H1 (cell line): ENCODE measurements at regions of chr10 and their contacts with region 1.

Region 1: DNA sequence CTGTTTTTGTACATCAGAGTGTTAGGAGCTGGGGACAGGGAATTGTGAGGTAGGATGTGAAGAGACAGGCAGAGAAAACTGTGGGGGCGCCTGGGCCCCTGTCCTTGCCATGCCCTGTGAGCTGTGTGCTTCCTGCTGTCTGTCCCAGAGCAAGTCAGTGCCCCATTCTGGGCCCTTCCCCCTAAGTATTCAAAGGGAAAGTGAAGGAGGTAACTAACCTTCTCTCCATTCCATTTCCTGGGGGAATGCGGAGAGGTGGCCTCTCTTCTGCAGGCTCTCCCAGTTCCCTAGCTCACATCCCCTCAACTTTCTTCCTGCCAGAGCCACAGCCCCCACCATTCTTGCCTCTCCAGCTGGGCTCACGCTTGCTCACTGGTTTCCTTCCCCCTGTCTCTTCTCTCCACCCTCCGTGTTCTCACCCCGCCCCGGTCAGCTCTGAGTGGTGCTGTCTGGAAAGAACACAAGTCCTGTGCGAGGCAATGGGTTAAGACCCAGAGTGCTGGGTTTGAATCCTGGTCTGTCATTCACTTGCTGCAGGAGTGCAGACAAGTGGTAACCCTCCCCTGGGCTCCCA is 9.7 kb upstream of the VSIR start:
- DNase-seq: no peak
- H3K4me3 ChIP-seq: no peak overlapping the region; a peak in 1 of 8 replicates
- H3K27ac ChIP-seq: no peak overlapping the region
- H3K4me1 ChIP-seq: peaks cover 0 to 6% (median 2%) of the 10 kb centered on the region in 4 experiments; a peak in 4 of 7 replicates
- H3K27me3 ChIP-seq: no peaks in the 10 kb centered on the region
- CTCF ChIP-seq: no peak
- EP300 ChIP-seq: no peak
- POLR2A ChIP-seq: no peak
- RAD21 ChIP-seq: no peak

Region 2: DNA sequence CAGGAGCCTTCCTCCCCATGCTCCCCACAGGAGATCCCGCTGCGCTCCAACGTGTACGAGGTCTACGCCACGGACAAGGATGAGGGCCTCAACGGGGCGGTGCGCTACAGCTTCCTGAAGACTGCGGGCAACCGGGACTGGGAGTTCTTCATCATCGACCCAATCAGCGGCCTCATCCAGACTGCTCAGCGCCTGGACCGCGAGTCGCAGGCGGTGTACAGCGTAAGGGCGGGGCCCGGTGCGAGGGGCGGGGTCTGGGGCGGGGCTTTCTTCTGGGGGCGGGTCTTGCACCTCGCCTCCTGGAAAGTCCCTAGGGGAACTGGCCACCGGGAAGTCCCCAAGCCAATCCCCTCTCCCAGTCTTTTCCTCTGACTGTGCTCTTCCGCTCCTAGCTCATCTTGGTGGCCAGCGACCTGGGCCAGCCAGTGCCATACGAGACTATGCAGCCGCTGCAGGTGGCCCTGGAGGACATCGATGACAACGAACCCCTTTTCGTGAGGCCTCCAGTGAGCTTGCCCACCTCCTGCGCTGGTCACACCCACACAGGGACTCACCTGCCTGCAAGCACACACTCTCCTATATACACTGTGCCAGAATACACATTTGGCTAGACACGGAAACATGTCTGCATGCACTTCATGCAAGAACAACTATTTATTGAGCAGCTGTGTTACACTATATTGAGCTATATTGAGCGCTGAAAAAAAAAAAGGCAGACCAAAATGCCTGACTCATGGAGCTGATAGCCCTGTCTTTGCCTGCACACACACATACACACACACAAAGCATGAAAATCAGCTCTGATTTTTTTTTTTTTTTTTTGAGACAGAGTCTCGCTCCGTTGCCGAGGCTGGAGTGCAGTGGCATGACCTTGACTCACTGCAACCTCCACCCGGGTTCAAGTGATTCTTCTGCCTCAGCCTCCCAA is 23.0 kb after region 1 on chr10:
- CTCF ChIA-PET with region 1: interaction called, 11 read pairs
- POLR2A ChIA-PET with region 1: no interaction called
- DNase-seq: peak in 1 of 2 experiments; percentile 67
- H3K4me3 ChIP-seq: peak overlapping the region in 2 of 4 experiments; percentile 1 to 50; a peak in 2 of 8 replicates
- H3K27ac ChIP-seq: no peak overlapping the region
- H3K4me1 ChIP-seq: peaks cover 0 to 7% (median 3%) of the 10 kb centered on the region in 4 experiments; a peak in 5 of 7 replicates
- H3K27me3 ChIP-seq: peaks cover 0 to 15% (median 10%) of the 10 kb centered on the region in 4 experiments; a peak in 6 of 7 replicates
- CTCF ChIP-seq: no peak
- EP300 ChIP-seq: no peak
- POLR2A ChIP-seq: no peak
- RAD21 ChIP-seq: no peak